Left cardiac atrium (tissue), 4 donors: ENCODE measurements at regions of chr10 and their contacts with region 1.

Region 1: GRCh38 chr10:32256613-32257437 is 90.1 kb downstream of the EPC1 start:
- DNase-seq: peak; percentile 65
- ATAC-seq: peak; percentile 61 to 79

Region 2: DNA sequence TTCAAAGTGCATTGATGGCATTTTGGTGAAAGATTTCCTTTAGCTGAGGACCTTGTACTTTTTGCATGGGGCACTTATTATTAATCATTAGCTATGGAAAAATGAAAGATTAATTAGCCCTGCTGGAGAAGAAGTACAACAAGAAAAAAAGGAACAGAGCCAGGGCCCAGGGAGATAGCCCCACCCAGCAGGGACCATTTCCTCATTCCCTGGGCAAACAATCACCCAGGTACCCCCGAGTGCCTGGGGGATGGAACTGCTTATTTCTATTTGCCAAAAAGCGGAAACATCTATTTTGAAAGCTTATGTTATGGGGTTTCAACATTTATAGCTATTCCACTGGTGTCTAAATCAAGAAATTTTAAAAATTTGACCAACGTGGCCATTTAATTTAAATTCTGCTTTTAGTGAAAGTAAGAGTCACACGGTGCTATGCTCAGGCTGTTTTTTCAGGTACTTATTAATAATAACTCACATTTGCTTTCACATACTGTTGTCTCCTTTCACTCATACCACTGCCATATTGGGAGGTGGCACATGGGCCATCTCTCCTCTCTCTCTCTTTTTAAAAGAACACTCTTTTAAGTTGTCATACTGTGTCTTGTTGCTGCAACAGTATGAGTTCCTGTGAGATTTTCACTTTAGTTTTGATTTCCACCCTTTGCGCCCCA is 57.0 kb before region 1 on chr10:
- intact Hi-C with region 1: no loop called
- DNase-seq: no peak
- ATAC-seq: no peak

Region 3: GRCh38 chr10:32346134-32346550 is 89.3 kb after region 1 on chr10:
- intact Hi-C with region 1: loop called (anchors 2 to 5 kb)
- DNase-seq: peak; percentile 97
- ATAC-seq: peak; percentile 96 to 98

Region 4: GRCh38 chr10:32357056-32357735 is 100.4 kb after region 1 on chr10:
- intact Hi-C with region 1: no loop called
- DNase-seq: no peak
- ATAC-seq: no peak

Region 5: GRCh38 chr10:32367793-32368453 is 111.1 kb after region 1 on chr10:
- intact Hi-C with region 1: loop called in 1 of 2 experiments (anchors 2 kb)
- DNase-seq: peak; percentile 73
- ATAC-seq: peak in 1 of 2 donors; percentile 51